ENCODE measurements at regions of chr1 and their contacts with region 1.

Region 1: DNA sequence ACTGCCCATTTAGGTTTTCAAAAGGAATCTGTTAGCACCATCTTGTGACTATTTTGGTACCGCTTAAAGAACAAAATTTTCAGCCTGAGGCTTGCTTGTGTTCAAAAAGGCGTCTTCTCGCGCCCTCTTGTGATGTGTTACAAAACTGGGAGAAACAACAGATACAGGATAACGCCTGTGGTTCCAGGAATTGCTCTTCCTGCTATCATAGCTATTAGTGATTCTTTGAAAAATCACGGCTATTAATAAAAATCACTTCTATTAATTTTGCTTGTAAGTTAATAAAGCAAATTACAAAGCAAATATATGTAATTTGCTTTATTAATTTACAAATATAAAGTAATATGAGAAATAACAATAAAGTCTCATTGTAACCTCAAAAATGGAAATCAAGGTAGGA is 82.2 kb upstream of the ABCD3 start:
- DNase-seq: no peak

Region 2: GRCh38 chr1:94027721-94028515 is 308.0 kb before region 1 on chr1:
- intact Hi-C with region 1: loop called (anchors 1 kb)
- DNase-seq: no peak

Region 3: GRCh38 chr1:94061513-94062443 is 274.2 kb before region 1 on chr1:
- intact Hi-C with region 1: loop called (anchors 1 kb)
- DNase-seq: no peak

Region 4: GRCh38 chr1:94463765-94464330 is 127.9 kb after region 1 on chr1:
- intact Hi-C with region 1: loop called (anchors 5 kb)
- DNase-seq: no peak

Measured in cardiac septum (tissue), 1 donor.